ENCODE measurements at regions of chr13 and their contacts with region 1.

Region 1: DNA sequence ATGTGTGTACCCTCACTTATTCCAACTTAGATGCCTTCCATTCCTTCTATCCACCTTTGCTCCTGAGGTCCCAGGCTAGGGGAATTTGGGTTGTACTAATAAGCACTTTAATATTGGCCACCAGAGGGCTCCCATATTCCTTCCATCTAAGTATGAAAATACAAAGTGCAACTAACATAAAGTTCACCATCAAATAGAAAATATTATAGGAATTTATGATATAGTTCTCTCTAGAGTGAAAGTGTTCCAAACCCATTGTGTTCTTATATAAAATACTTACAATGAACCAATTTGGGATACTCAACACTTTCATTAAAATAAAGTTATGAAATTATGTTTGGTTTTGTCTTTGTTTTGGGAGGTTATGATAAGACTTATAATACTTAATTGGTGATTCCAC is 62.3 kb downstream of the ITGBL1 start:
- DNase-seq: peak; percentile 8
- ATAC-seq: peak; percentile 38; the same call in 1 of the 2 replicates
- H3K4me3 ChIP-seq: no peak overlapping the region
- H3K27ac ChIP-seq: no peak overlapping the region
- H3K4me1 ChIP-seq: no peaks in the 10 kb centered on the region
- H3K27me3 ChIP-seq: no peaks in the 10 kb centered on the region
- CTCF ChIP-seq: peak in 2 of 3 experiments; percentile 40 to 55; a peak in 4 of 6 replicates
- POLR2A ChIP-seq: no peak
- RAD21 ChIP-seq: peak; percentile 43

Region 2: DNA sequence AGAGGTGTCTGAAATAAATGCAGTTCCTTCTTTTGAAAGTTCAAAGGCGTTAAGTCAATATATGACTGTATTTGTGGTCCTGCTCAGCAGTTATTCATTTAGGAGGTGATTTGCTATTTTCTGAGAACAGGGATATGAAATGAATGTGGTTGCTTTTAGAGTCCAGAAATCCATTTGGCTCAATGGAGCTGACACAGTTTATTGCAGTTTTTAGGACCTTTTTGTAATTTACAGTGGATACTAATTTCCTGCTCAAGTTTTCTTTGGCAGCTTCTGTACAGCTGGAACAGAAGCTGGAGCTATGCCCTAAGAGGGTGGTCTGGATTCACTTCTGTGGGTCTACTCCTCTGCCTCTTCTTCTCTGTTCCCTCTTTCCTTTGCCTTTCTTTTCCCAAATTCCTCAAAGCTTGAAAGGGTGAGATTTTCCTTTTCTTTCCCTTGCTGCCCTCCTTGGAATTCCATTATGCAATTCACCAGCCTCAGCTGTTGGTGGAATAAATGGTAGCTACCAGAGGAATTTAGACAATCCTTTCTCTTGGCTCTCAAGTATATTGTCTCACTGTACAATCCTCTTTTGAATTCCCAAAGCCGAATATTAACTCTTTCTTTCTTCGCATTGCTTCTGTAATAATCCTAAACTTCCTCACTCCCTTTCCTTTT is 22.4 kb before region 1 on chr13:
- CTCF ChIA-PET with region 1: no interaction called
- POLR2A ChIA-PET with region 1: no interaction called
- RAD21 ChIA-PET with region 1: no interaction called
- intact Hi-C with region 1: no loop called
- DNase-seq: no peak
- ATAC-seq: no peak
- H3K4me3 ChIP-seq: no peak overlapping the region
- H3K27ac ChIP-seq: no peak overlapping the region
- H3K4me1 ChIP-seq: no peaks in the 10 kb centered on the region
- H3K27me3 ChIP-seq: no peaks in the 10 kb centered on the region
- CTCF ChIP-seq: no peak
- POLR2A ChIP-seq: no peak
- RAD21 ChIP-seq: no peak

Region 3: DNA sequence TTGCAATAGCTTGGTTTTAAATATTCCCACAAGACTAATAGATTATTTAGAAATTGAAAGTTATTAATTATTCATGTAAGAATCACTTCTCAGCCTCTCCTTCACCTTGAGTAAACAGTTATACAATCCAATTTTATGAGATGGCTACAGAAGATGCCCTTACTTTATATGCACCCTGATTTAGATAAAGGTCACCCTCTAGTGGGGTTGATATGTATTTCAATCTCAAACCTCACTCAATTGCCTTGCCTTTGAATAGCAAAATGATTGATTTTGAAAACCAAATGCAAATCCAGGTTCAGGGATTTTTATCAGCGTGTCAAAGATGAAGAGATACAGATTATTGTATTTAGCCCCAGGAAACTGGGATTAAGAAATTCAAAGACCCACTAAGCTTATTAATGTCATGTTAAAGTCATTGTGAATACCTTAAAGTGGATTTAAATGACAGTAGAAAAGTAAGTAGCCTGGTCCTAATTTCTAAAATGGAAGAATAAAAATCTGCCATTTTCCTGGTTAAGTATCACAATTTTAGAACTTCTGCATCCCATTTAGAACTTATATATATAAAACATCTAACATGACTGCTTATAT is 242.8 kb after region 1 on chr13:
- CTCF ChIA-PET with region 1: interaction called, 11 read pairs
- POLR2A ChIA-PET with region 1: interaction called, 3 read pairs
- RAD21 ChIA-PET with region 1: no interaction called
- intact Hi-C with region 1: loop called (anchors 5 kb)
- DNase-seq: no peak
- ATAC-seq: no peak
- H3K4me3 ChIP-seq: no peak overlapping the region
- H3K27ac ChIP-seq: no peak overlapping the region
- H3K4me1 ChIP-seq: no peaks in the 10 kb centered on the region
- H3K27me3 ChIP-seq: no peaks in the 10 kb centered on the region
- CTCF ChIP-seq: peak in 2 of 3 experiments; percentile 11 to 24; a peak in 2 of 6 replicates
- POLR2A ChIP-seq: no peak
- RAD21 ChIP-seq: peak; percentile 42

Measured in HCT116 (cell line).